Endothelial cell of umbilical vein (primary cell): ENCODE measurements at regions of chr2 and their contacts with region 1.

Region 1: GRCh38 chr2:14661163-14661562 is 28.6 kb downstream of the LRATD1 start:
- DNase-seq: no peak
- H3K4me3 ChIP-seq: no peak overlapping the region
- H3K27ac ChIP-seq: no peak overlapping the region
- H3K4me1 ChIP-seq: no peaks in the 10 kb centered on the region
- H3K27me3 ChIP-seq: no peaks in the 10 kb centered on the region
- CTCF ChIP-seq: no peak
- POLR2A ChIP-seq: no peak

Region 2: DNA sequence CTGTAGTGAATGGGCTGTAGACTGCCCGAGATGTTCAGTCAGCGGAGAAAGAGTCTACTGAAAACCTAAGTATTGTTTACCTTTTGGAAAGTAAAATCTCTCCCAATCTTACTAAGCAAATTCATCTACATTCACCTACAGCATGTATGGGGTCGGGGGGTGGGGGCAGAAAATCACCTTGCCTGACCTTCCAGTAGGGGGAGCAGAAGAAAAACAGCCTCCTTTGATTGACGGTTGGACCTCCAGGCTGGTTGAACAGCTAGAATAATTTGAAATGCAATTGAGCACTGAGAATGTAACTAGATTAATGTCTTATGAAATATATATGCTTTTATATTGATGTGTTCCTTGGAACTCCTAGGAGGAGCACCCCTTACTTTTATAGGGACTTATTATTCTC is 18.7 kb before region 1 on chr2:
- CTCF ChIA-PET with region 1: no interaction called
- POLR2A ChIA-PET with region 1: no interaction called
- dilution Hi-C with region 1: no loop called
- intact Hi-C with region 1: loop called (anchors 1 kb)
- DNase-seq: no peak
- H3K4me3 ChIP-seq: no peak overlapping the region
- H3K27ac ChIP-seq: no peak overlapping the region
- H3K4me1 ChIP-seq: no peaks in the 10 kb centered on the region
- H3K27me3 ChIP-seq: no peaks in the 10 kb centered on the region
- CTCF ChIP-seq: no peak
- POLR2A ChIP-seq: no peak